PC-3 (cell line): ENCODE measurements at regions of chr3 and their contacts with region 1.

Region 1: GRCh38 chr3:184218814-184219213 is 10.6 kb upstream of the VWA5B2 start:
- DNase-seq: no peak
- ATAC-seq: no peak
- H3K4me3 ChIP-seq: no peak overlapping the region
- H3K27ac ChIP-seq: no peak overlapping the region
- H3K4me1 ChIP-seq: peaks cover 6% of the 10 kb centered on the region
- H3K27me3 ChIP-seq: no peaks in the 10 kb centered on the region
- CTCF ChIP-seq: no peak

Region 2: DNA sequence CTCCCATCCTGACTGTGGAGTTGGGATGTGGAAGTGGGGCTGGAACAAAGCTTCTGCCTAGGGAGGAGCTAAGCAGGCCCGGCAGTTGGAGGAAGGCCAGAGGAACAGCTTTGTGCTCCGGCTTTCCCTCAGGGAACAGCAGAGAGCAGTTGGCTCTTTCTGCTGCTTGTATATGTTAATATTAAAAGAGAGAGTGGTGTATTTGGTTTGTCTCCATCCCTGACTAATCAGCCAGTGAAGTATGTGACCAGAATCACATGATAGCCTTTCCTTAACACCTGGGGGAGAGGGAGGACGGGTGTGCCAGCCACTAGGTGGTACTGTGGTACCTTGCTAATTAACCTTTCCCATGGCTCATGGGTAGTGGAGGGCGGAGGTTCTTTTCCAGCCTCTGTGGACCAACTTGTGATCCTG is 73.7 kb before region 1 on chr3:
- CTCF ChIA-PET with region 1: no interaction called
- POLR2A ChIA-PET with region 1: interaction called, 25 read pairs
- intact Hi-C with region 1: no loop called
- DNase-seq: peak; percentile 72
- ATAC-seq: peak; percentile 92
- H3K4me3 ChIP-seq: no peak overlapping the region
- H3K27ac ChIP-seq: no peak overlapping the region
- H3K4me1 ChIP-seq: no peaks in the 10 kb centered on the region
- H3K27me3 ChIP-seq: no peaks in the 10 kb centered on the region
- CTCF ChIP-seq: peak; percentile 73